ENCODE measurements at regions of chr5 and their contacts with region 1.

Region 1: GRCh38 chr5:111757355-111758283 is 625 bp upstream of the NREP start:
- DNase-seq: peak; percentile 97

Region 2: DNA sequence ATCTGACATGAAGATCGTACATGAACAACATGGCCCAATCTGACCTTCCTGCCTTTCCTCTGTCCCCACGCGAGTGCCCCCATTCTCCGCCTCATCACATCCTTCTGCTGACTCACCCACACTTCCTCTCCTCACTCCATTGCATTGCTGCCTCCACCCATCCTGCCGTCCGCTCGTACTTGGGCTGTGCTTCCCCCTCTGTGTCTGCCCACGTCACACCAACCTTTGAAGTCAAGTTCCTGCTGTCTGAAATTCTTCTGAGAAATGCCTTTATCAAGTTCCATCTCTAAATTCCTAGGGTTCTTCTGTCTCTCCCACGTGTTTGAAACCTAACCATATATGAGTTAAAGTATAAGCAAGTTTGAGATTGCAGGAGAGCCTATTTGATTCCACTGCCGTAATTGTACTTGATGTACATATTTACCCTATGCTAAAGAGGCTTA is 227.3 kb before region 1 on chr5:
- intact Hi-C with region 1: loop called (anchors 5 kb)
- DNase-seq: peak; percentile 88

Region 3: GRCh38 chr5:111680737-111681413 is 76.7 kb before region 1 on chr5:
- intact Hi-C with region 1: loop called (anchors 2 kb)
- DNase-seq: no peak

Region 4: DNA sequence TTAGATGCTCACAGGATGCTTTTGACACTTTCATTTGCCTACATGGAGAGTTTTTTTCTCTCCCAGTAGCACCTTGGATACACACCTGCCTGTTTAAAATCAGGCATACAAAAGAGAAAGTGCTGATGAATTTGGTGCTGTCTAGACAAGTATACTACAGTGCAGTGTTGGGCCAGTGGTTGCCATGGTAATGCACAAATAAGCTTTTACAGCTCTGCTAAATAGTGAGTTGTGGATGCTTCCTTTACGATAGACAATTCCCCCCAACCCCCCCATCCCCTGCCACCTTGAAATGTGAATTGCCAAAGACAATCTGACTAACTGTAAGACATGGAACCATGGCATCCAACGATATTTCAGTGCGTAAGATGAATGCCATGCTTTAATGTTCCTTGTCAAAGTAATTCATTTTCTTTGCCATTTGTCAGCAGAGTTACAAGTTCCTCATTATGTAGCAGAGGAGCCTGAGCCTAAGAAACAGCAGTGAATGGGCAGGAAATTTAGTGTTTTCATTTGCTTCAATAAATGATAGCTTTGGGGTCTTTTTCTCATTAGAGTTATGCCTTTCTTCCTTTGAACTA is 90.9 kb after region 1 on chr5:
- intact Hi-C with region 1: no loop called
- DNase-seq: no peak

Region 5: DNA sequence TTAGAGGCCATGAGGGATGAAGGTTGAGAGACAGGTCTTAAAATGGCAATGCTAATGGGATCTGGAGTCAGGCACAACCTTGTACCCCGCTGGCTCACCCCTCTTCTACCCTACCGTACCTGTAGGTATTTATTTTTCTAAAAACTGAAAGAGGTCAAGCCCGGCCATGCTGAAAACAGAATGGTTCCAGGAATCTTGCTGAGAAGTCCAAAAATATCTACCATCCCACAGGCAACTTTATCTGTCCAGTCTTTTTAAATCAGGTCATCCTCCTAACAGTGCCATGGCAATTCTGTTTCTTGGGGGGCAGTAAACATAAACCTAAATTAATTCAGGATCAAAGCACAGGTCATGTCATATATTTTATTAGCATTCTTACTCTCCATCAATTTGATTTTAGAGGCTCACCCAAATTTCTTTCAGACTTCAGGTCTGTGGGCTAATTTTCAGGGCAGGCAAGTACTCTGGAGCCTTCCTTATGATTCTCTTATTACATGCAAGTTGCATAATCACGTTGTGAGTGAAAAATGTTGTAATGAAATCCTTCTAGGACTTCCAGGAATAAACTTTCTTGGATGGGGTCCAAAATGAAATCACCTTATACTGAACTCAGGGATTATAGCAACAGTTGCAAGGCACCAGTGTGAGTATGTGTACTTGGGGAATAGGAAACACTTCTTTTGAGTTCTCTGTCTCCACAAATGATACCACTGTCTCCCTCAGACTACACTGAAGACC is 102.1 kb after region 1 on chr5:
- intact Hi-C with region 1: loop called (anchors 5 kb)
- DNase-seq: no peak

Region 6: GRCh38 chr5:111968459-111968858 is 210.8 kb after region 1 on chr5:
- intact Hi-C with region 1: no loop called
- DNase-seq: no peak

Measured in cardiac septum (tissue), 1 donor.